CD4-positive, alpha-beta memory T cell (primary cell): ENCODE measurements at regions of chr3 and their contacts with region 1.

Region 1: GRCh38 chr3:186849374-186849975 is 7.0 kb downstream of the ADIPOQ start:
- DNase-seq: peak in 4 of 5 donors; percentile 63 to 70 (median 66)
- H3K4me3 ChIP-seq: no peak overlapping the region
- H3K4me3 Mint-ChIP-seq: no peak overlapping the region
- H3K27ac ChIP-seq: no peak overlapping the region
- H3K27ac Mint-ChIP-seq: peak overlapping the region in 5 of 7 donors; percentile 1 to 84 (median 67)
- H3K4me1 ChIP-seq: peaks cover 9% of the 10 kb centered on the region
- H3K4me1 Mint-ChIP-seq: peaks cover 8 to 19% (median 14%) of the 10 kb centered on the region in 4 donors
- H3K27me3 ChIP-seq: peaks cover 4% of the 10 kb centered on the region
- H3K27me3 Mint-ChIP-seq: peaks cover 3 to 9% of the 10 kb centered on the region in 2 donors

Region 2: GRCh38 chr3:186772701-186773424 is 76.6 kb before region 1 on chr3:
- CTCF ChIA-PET with region 1: no interaction called
- POLR2A ChIA-PET with region 1: no interaction called
- intact Hi-C with region 1: no loop called
- DNase-seq: peak; percentile 46 to 63 (median 49)
- H3K4me3 ChIP-seq: peak overlapping the region; percentile 37 to 72
- H3K4me3 Mint-ChIP-seq: peak overlapping the region; percentile 88 to 99 (median 96)
- H3K27ac ChIP-seq: peak overlapping the region; percentile 61
- H3K27ac Mint-ChIP-seq: peak overlapping the region; percentile 81 to 95 (median 95)
- H3K4me1 ChIP-seq: peaks cover 12% of the 10 kb centered on the region
- H3K4me1 Mint-ChIP-seq: peaks cover 0 to 18% (median 13%) of the 10 kb centered on the region in 4 donors
- H3K27me3 ChIP-seq: no peaks in the 10 kb centered on the region
- H3K27me3 Mint-ChIP-seq: no peaks in the 10 kb centered on the region

Region 3: GRCh38 chr3:186909078-186909853 is 59.8 kb after region 1 on chr3:
- CTCF ChIA-PET with region 1: interaction called, 36 read pairs
- POLR2A ChIA-PET with region 1: interaction called, 23 read pairs
- intact Hi-C with region 1: no loop called
- DNase-seq: peak; percentile 84 to 89 (median 87)
- H3K4me3 ChIP-seq: peak overlapping the region; percentile 50 to 66
- H3K4me3 Mint-ChIP-seq: peak overlapping the region; percentile 58 to 86 (median 77)
- H3K27ac ChIP-seq: peak overlapping the region; percentile 58
- H3K27ac Mint-ChIP-seq: peak overlapping the region; percentile 91 to 95 (median 94)
- H3K4me1 ChIP-seq: peaks cover 32% of the 10 kb centered on the region
- H3K4me1 Mint-ChIP-seq: peaks cover 22 to 52% (median 38%) of the 10 kb centered on the region in 4 donors
- H3K27me3 ChIP-seq: no peaks in the 10 kb centered on the region
- H3K27me3 Mint-ChIP-seq: no peaks in the 10 kb centered on the region

Region 4: GRCh38 chr3:186959029-186959624 is 109.7 kb after region 1 on chr3:
- CTCF ChIA-PET with region 1: interaction called, 16 read pairs
- POLR2A ChIA-PET with region 1: interaction called, 8 read pairs
- intact Hi-C with region 1: no loop called
- DNase-seq: no peak
- H3K4me3 ChIP-seq: no peak overlapping the region
- H3K4me3 Mint-ChIP-seq: peak overlapping the region in 2 of 8 donors; percentile 5 to 28
- H3K27ac ChIP-seq: no peak overlapping the region
- H3K27ac Mint-ChIP-seq: peak overlapping the region; percentile 8 to 84 (median 75)
- H3K4me1 ChIP-seq: peaks cover 57% of the 10 kb centered on the region
- H3K4me1 Mint-ChIP-seq: peaks cover 50 to 78% (median 64%) of the 10 kb centered on the region in 4 donors
- H3K27me3 ChIP-seq: no peaks in the 10 kb centered on the region
- H3K27me3 Mint-ChIP-seq: no peaks in the 10 kb centered on the region

Region 5: GRCh38 chr3:187016639-187017345 is 167.3 kb after region 1 on chr3:
- CTCF ChIA-PET with region 1: interaction called, 11 read pairs
- POLR2A ChIA-PET with region 1: no interaction called
- intact Hi-C with region 1: no loop called
- DNase-seq: no peak
- H3K4me3 ChIP-seq: no peak overlapping the region
- H3K4me3 Mint-ChIP-seq: peak overlapping the region in 2 of 8 donors; percentile 22 to 41
- H3K27ac ChIP-seq: peak overlapping the region; percentile 25
- H3K27ac Mint-ChIP-seq: peak overlapping the region; percentile 48 to 85 (median 82)
- H3K4me1 ChIP-seq: peaks cover 86% of the 10 kb centered on the region
- H3K4me1 Mint-ChIP-seq: peaks cover 47 to 89% (median 69%) of the 10 kb centered on the region in 4 donors
- H3K27me3 ChIP-seq: no peaks in the 10 kb centered on the region
- H3K27me3 Mint-ChIP-seq: no peaks in the 10 kb centered on the region

Region 6: DNA sequence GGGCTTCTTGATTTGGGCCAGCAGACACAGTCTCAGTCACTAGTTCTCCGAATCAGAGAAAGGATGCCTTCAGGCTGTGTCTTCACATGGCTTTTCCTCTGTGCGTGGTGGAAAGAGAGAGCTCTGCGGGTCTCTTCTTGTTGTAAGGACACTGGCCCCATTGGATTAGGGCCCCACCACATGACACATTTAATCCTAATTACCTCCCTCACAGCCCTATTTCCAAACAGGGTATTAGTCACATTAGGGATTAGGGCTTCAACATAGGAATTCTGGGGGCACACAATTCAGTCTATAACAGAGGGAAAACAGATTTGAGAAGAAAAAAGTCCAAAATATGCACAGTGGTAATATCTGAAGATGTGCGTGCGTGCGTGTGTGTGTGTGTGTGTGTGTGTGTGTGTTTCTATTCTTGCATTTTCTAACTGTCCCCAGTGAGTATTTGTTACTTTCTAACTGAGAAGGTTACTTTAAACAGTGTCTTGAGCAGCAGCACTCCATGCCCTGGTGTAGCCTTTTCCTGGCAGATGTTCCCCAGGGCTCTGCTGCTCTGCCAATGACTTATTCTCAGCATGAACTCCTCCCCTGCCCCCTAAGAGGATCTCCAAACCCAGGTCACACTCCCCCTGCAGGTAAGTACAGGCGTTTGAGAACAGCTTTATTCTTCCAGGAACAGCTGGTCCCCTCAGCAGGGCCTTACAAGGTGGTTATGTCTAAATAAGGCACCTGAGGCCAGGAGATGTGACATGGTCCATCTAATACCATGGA is 216.9 kb after region 1 on chr3:
- CTCF ChIA-PET with region 1: interaction called, 42 read pairs
- POLR2A ChIA-PET with region 1: interaction called, 4 read pairs
- intact Hi-C with region 1: loop called (anchors 1 kb)
- DNase-seq: peak; percentile 38 to 76 (median 56)
- H3K4me3 ChIP-seq: no peak overlapping the region
- H3K4me3 Mint-ChIP-seq: no peak overlapping the region
- H3K27ac ChIP-seq: no peak overlapping the region
- H3K27ac Mint-ChIP-seq: peak overlapping the region; percentile 44 to 94 (median 85)
- H3K4me1 ChIP-seq: peaks cover 46% of the 10 kb centered on the region
- H3K4me1 Mint-ChIP-seq: peaks cover 48 to 61% (median 54%) of the 10 kb centered on the region in 4 donors
- H3K27me3 ChIP-seq: no peaks in the 10 kb centered on the region
- H3K27me3 Mint-ChIP-seq: no peaks in the 10 kb centered on the region

Region 7: DNA sequence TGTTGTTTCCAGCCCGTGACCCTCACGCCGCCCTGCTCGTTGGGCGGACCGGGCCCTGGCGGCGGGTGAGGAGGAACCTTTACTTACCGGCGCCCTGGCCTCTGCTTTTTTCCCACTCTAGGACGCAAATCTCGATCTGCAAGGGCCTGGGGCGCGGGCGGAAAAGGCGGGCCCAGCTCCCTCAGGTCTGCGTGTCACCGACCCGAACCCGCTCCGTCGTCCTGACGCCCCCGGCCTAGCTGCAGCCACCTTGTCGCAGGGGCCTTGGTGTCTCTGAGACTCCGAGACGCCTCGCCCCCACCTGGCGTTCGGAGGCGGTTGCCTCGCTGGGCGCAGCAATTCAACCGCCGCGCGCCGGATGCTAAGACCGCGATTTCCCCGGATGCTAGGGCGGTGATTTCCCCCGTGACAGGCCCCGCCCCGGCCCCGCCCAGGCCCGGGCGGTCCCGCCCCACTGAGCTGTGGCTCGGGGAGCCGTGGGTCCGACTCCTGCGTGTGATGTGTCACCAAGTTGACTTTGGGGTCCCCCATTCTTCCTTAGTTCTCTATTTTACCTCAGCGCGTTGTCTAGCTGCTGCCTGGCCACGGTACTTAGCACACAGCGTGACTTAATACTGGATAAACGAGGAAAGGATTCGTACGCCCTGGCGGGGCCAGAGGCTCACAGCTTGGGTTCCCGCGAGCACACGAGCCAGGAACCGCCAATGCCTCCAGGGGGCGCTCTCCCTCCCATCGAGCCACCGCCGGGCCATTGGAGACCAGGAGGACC is 289.8 kb after region 1 on chr3 and contains the start of gene RPL39L:
- CTCF ChIA-PET with region 1: interaction called, 17 read pairs
- POLR2A ChIA-PET with region 1: interaction called, 3 read pairs
- intact Hi-C with region 1: no loop called
- DNase-seq: peak; percentile 91 to 93 (median 92)
- H3K4me3 ChIP-seq: peak within 1 kb of the TSS; percentile 24 to 86
- H3K4me3 Mint-ChIP-seq: peak within 1 kb of the TSS; percentile 82 to 94 (median 91)
- H3K27ac ChIP-seq: peak within 1 kb of the TSS; percentile 74
- H3K27ac Mint-ChIP-seq: peak within 1 kb of the TSS; percentile 87 to 97 (median 95)
- H3K4me1 ChIP-seq: peaks cover 17% of the 10 kb centered on the region
- H3K4me1 Mint-ChIP-seq: peaks cover 9 to 34% (median 18%) of the 10 kb centered on the region in 4 donors
- H3K27me3 ChIP-seq: no peaks in the 10 kb centered on the region
- H3K27me3 Mint-ChIP-seq: no peaks in the 10 kb centered on the region
- total RNA-seq, gene RPL39L: 2.6 to 3.6 TPM